Kidney (tissue), 22 donors: ENCODE measurements at regions of chr19 and their contacts with region 1.

Region 1: DNA sequence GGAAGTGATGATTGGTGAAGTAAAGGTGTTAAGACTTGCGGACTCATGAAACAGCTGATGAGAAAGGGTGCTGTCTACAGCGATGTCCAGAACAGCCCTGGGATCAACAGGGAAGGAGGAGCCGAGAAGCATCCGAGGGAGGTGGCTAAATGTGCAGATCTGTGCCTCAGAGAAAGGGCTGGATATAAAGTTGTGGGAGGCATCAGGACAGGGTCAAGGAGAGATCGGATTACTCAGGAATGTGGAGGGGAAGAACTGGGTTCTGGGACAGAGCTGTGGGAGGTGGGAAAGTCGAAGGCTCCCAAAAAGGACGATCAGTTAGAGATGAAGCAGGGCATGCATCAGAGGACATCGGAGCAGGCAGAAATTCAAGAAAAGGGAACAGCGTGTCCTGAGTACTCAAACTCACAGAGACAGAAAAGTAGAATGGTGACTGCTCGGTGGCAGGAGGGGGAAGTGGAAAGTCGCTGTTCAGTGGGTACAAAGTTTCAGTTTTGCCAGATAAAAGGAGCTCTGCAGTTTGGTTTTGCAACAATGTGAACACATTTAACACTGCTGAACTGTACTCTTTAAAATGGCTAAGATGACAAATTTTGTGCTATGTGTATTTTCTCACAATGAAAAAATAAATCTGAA is 1.9 kb downstream of the SIGLEC14 start:
- DNase-seq: peak in 2 of 5 donors; percentile 32 to 48
- H3K4me3 ChIP-seq: no peak overlapping the region
- H3K27ac ChIP-seq: no peak overlapping the region
- H3K4me1 ChIP-seq: no peaks in the 10 kb centered on the region
- H3K27me3 ChIP-seq: no peaks in the 10 kb centered on the region
- CTCF ChIP-seq: no peak

Region 2: GRCh38 chr19:51473009-51473707 is 171.6 kb before region 1 on chr19:
- intact Hi-C with region 1: loop called (anchors 10 kb)
- DNase-seq: peak in 4 of 5 donors; percentile 46 to 77 (median 70)
- H3K4me3 ChIP-seq: no peak overlapping the region
- H3K27ac ChIP-seq: no peak overlapping the region
- H3K4me1 ChIP-seq: no peaks in the 10 kb centered on the region
- H3K27me3 ChIP-seq: no peaks in the 10 kb centered on the region
- CTCF ChIP-seq: peak; percentile 68

Region 3: GRCh38 chr19:52007806-52008557 is 363.2 kb after region 1 on chr19 and contains the start of gene ZNF615:
- intact Hi-C with region 1: no loop called
- DNase-seq: peak; percentile 92 to 97 (median 95)
- H3K4me3 ChIP-seq: peak within 1 kb of the TSS; percentile 99 to 100 (median 99)
- H3K27ac ChIP-seq: peak within 1 kb of the TSS; percentile 85 to 88
- H3K4me1 ChIP-seq: peaks cover 0 to 3% (median 3%) of the 10 kb centered on the region in 3 donors
- H3K27me3 ChIP-seq: no peaks in the 10 kb centered on the region
- CTCF ChIP-seq: no peak
- total RNA-seq, gene ZNF615: 15.3 TPM